Esophagus muscularis mucosa (tissue), 4 donors: ENCODE measurements at regions of chr1 and their contacts with region 1.

Region 1: DNA sequence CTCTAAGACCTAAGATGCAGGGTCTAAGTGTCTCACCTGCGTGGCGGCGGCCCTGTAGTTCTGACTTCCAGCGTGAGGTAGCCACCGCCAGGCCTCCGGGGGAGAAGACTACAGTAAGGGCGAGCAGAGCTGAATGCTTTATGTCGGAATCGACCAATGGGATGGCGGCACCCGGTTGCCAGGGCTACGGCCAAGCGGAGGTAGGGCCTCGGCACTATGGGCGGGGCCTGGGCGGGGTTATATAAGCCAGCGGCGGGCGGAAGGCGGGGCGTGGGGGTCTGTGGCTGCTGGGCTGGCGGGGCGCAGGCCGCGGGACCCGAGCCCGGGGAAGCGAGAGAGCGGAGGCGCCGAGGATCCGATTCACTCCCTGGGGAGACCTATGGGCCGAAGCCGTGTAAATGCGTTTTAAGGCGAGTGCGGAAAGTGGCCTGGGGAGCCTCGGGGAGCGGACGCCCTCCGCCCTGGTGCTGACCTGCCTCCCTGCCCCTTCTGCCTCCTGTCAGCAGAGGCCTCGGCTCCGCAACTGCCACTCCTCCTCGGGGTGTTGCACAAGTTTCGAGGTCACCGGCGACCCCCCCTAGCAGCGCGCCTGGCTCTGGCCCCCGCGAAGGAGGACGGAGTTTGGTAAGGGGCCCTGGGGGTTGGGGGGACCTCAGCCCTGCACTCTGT is at the start of gene AZIN2:
- DNase-seq: peak; percentile 99
- H3K4me3 ChIP-seq: peak within 1 kb of the TSS; percentile 70 to 86 (median 76)
- H3K27ac ChIP-seq: peak within 1 kb of the TSS; percentile 23 to 57 (median 48)
- H3K4me1 ChIP-seq: peaks cover 14 to 24% (median 22%) of the 10 kb centered on the region in 4 donors
- H3K27me3 ChIP-seq: no peaks in the 10 kb centered on the region
- CTCF ChIP-seq: no peak
- EP300 ChIP-seq: no peak
- POLR2A ChIP-seq: peak; percentile 26
- total RNA-seq, gene AZIN2: 2.5 to 6.1 (median 4.1) TPM

Region 2: GRCh38 chr1:32716312-32717148 is 364.5 kb before region 1 on chr1:
- intact Hi-C with region 1: loop called (anchors 10 kb)
- DNase-seq: no peak
- H3K4me3 ChIP-seq: no peak overlapping the region
- H3K27ac ChIP-seq: no peak overlapping the region
- H3K4me1 ChIP-seq: peaks cover 4 to 18% (median 9%) of the 10 kb centered on the region in 4 donors
- H3K27me3 ChIP-seq: no peaks in the 10 kb centered on the region
- CTCF ChIP-seq: no peak
- EP300 ChIP-seq: no peak
- POLR2A ChIP-seq: no peak